Sigmoid colon (tissue), 7 donors: ENCODE measurements at regions of chr11 and their contacts with region 1.

Region 1: DNA sequence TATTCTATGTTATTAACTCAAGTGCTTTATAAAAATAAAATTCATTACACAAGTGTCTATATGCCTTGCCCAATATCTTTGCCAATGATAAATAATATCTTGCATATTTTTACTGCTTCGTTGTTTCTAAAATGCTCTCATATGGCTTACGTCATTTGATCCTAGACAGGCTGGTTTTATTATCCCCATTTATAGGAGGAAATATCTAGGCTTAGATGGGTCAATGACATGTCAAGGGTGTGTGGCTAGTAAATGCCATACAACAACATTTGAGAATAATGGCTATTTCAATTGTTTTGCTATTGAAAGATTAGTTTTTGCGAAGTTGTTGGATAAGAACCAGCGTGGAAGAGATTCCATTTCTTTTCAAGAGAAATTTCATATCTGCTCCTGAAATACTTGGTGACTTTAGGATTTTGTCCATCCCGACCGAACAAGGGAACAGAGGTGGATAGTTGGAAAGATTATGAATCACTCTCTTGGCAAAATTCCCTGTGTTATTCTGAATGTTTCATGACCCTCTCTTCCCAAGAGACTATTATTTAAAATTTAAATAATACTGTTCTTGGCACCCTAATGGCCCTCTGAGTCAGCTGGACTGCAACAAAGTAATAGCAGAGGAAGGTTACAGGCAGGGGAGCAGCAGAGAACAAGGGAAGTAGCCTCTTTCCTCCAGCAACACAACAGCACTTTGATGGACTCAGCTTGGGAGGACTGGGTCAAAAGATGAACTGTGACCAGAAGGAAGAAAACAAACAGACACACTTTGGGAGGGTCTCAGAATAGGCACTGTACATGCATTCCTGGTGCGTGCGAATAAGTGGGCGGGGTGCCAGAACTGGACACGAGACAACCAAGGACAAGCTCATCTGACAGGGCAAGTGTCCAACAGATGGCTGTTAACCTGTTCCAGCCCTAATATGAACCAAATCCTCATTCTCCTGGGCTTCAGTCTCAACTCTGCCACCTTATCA is 94.5 kb downstream of the ME3 start:
- DNase-seq: peak; percentile 91
- H3K4me3 ChIP-seq: no peak overlapping the region
- H3K27ac ChIP-seq: peak overlapping the region; percentile 62 to 86 (median 72)
- H3K4me1 ChIP-seq: peaks cover 0 to 58% (median 45%) of the 10 kb centered on the region in 4 donors
- H3K27me3 ChIP-seq: no peaks in the 10 kb centered on the region
- CTCF ChIP-seq: no peak
- EP300 ChIP-seq: peak in 3 of 4 donors; percentile 15 to 63 (median 60)
- POLR2A ChIP-seq: no peak

Region 2: DNA sequence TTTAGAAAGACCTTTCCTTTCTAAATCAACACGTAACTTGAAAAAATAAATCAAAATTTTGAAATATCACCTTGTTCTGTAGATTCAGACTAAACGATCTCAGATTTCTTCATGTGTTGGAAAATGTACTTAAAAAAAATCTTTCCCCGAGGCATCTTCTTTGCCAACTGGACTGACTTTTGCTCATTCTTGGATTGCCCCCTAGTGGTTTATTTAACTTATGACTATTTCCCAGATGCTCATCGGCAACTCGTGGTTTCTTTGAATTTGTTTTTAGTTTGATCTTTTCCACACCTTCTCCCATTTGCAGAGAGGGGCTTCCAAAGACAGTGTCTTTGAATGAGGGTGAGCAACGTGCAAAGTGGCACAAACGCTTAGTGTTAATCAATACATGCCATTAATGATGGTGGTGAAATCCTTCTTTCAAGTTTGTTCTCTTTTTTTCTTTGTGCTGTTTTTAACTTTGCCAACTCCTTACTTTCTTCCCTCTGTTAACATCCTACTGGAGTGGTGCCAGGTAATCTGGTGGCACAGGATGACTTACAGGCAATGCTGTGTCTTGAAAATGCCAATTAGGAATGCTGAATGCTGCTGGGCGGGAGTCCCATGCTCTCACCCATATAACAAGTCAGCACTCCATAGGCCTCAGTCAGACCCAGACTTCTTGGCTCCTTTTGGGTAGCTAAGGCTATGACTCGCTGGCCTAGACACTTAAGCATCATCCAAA is 240.7 kb after region 1 on chr11:
- intact Hi-C with region 1: loop called (anchors 5 kb)
- DNase-seq: no peak
- H3K4me3 ChIP-seq: no peak overlapping the region
- H3K27ac ChIP-seq: peak overlapping the region in 3 of 4 donors; percentile 80 to 92 (median 87)
- H3K4me1 ChIP-seq: peaks cover 0 to 58% (median 55%) of the 10 kb centered on the region in 4 donors
- H3K27me3 ChIP-seq: no peaks in the 10 kb centered on the region
- CTCF ChIP-seq: peak; percentile 64 to 82 (median 72)
- EP300 ChIP-seq: peak in 1 of 4 donors; percentile 8
- POLR2A ChIP-seq: no peak